HEK293 (cell line): ENCODE measurements at regions of chr1 and their contacts with region 1.

Region 1: GRCh38 chr1:38064232-38064903 is 17.8 kb upstream of the POU3F1 start:
- H3K4me3 ChIP-seq: no peak overlapping the region
- H3K27ac ChIP-seq: no peak overlapping the region
- H3K4me1 ChIP-seq: no peaks in the 10 kb centered on the region
- CTCF ChIP-seq: no peak

Region 2: DNA sequence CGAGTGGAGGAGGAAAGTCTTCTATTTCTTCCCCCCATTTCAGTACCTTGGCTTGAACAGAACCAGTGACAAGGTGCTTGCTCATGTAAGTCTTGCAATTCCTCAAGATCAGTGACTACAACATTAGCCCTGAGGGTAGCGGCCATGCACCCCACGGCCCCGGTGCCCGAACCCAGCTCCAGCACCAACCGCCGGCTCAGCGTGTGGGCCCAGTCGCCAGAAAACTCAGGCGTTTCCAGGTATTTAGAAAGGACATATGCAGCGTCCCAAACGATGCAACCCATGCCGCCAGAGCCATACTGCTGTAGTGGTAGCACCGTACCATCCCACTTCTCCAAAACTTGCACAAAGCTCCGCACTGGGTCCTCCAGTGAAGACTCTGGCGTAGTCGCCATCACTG is 281.9 kb before region 1 on chr1:
- CTCF ChIA-PET with region 1: no interaction called
- POLR2A ChIA-PET with region 1: no interaction called
- H3K4me3 ChIP-seq: no peak overlapping the region
- H3K27ac ChIP-seq: no peak overlapping the region
- H3K4me1 ChIP-seq: no peaks in the 10 kb centered on the region
- CTCF ChIP-seq: no peak

Region 3: DNA sequence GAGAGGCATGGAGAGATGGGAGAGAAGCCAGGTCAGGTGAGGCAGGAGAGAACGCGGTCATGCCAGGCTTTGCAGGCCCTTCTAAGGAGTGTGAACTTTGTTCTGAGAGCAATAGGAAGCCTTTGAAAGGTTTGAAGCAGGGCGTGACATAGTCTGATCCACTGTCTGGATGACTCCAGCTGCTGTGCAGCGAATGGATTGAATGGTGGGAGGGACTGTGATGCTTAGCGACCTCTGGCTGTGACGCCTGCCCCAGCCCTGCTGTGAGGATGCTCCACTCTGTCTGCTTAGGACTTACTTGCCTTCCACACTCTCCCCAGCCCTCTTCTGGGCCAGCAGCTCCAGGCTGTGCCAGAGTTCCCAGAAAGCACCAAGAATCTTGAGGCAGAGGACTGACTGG is 24.0 kb after region 1 on chr1:
- CTCF ChIA-PET with region 1: no interaction called
- POLR2A ChIA-PET with region 1: no interaction called
- H3K4me3 ChIP-seq: no peak overlapping the region
- H3K27ac ChIP-seq: no peak overlapping the region
- H3K4me1 ChIP-seq: no peaks in the 10 kb centered on the region
- CTCF ChIP-seq: no peak

Region 4: DNA sequence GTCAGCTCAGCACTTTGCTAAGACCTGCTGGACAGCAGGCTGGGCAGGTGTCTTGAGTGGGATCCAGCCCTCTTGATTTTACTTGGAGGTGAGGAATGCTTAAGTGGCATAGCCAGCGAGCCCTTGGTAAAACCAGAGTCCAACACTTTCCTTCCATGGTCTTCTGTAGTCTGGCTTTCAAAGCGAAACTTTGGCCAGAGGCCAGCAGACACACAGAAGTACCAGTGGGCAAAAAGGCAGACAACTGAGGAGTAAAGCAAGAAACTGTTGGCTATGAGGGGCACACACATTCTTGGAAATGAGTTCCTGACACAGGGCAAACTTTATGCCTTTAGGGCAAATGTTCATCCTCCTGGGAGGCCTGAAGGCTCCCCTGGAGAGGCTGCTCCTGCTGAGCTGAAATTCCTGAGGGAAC is 263.2 kb after region 1 on chr1:
- CTCF ChIA-PET with region 1: no interaction called
- POLR2A ChIA-PET with region 1: interaction called, 10 read pairs
- H3K4me3 ChIP-seq: no peak overlapping the region
- H3K27ac ChIP-seq: no peak overlapping the region
- H3K4me1 ChIP-seq: no peaks in the 10 kb centered on the region
- CTCF ChIP-seq: no peak